ENCODE measurements at regions of chr1 and their contacts with region 1.

Region 1: DNA sequence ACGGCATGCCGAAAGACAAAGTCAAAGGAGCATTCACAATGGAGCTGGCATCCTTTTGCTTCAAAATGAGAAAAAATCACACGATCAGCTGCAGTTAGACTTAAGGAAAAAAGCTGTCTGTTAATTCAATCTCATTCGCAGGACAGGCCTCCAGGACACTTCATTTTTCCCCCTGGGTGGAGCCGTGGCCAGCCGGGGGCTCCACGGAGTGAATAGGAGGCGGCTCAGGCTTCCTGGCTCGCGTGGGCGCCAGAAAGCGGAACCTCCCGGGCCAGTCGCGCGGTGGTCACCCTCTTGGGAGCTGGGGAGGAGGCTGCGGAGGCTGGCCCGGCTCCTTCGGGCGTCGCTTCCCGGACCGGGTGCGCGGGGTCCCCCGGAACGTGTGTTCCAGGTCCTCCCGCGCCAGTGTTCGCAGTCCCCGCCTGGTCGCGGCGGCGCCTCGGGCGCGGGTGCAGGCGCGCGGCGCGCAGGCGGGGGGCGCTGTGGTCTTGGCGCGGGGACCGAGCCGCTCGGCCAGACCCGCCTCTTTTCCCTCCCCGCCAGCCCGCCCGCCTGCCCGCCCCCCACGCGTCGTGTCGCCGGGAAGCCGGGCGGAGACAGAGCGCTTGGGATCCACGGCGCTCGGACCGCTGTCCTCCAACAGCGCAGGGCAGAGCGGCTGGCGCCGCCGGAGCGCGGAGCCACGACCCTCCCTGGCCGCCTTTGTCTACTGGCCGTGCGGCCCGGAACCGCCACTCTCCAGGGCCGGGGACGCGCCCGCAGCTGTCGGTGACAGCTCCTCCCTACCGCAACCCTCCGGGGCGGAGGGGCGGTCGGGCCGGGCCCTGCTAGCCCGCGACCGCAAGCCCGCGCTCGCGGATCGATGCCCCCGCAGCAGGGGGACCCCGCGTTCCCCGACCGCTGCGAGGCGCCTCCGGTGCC is at the start of gene RHOU:
- DNase-seq: peak; percentile 79 to 91 (median 81)
- ATAC-seq: peak; percentile 84 to 95 (median 90)
- H3K4me3 ChIP-seq: peak within 1 kb of the TSS; percentile 62 to 94 (median 81)
- H3K27ac ChIP-seq: peak within 1 kb of the TSS; percentile 68 to 96 (median 86)
- H3K4me1 ChIP-seq: peaks cover 0 to 47% (median 9%) of the 10 kb centered on the region in 12 donors
- H3K27me3 ChIP-seq: peaks cover 0 to 7% (median 0%) of the 10 kb centered on the region in 9 donors
- CTCF ChIP-seq: peak; percentile 21 to 96 (median 90)
- POLR2A ChIP-seq: peak in 1 of 2 donors; percentile 53
- total RNA-seq, gene RHOU: 2.1 to 20.5 (median 2.9) TPM

Region 2: GRCh38 chr1:228332797-228333738 is 402.1 kb before region 1 on chr1:
- intact Hi-C with region 1: no loop called
- DNase-seq: peak in 3 of 5 donors; percentile 5 to 18 (median 15)
- ATAC-seq: no peak
- H3K4me3 ChIP-seq: no peak overlapping the region
- H3K27ac ChIP-seq: no peak overlapping the region
- H3K4me1 ChIP-seq: peaks cover 0 to 20% (median 0%) of the 10 kb centered on the region in 12 donors
- H3K27me3 ChIP-seq: no peaks in the 10 kb centered on the region
- CTCF ChIP-seq: no peak
- POLR2A ChIP-seq: no peak

Region 3: DNA sequence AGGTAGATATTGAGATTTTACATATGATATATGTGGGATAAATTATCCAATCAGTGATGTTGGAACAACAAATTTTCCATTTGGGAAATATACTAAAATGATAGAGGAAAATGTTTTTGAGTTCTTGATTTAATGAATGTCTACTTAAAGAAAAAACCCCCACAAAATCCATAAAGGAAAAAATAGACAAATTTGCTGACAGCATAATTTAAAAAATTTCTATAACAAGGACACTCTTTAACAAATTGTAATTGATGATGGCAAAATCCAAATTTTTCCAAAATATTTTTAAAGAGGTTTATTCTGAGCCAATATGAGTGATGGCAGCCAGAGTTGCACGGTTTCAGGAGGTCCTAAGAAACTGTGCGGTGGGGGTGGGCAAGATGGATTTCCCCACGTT is 51.7 kb before region 1 on chr1:
- intact Hi-C with region 1: no loop called
- DNase-seq: no peak
- ATAC-seq: no peak
- H3K4me3 ChIP-seq: no peak overlapping the region
- H3K27ac ChIP-seq: no peak overlapping the region
- H3K4me1 ChIP-seq: peaks cover 0 to 22% (median 5%) of the 10 kb centered on the region in 12 donors
- H3K27me3 ChIP-seq: peaks cover 0 to 3% (median 0%) of the 10 kb centered on the region in 9 donors
- CTCF ChIP-seq: no peak
- POLR2A ChIP-seq: no peak

Region 4: GRCh38 chr1:228825840-228826484 is 90.8 kb after region 1 on chr1:
- intact Hi-C with region 1: loop called in 2 of 10 experiments (anchors 10 kb)
- DNase-seq: no peak
- ATAC-seq: no peak
- H3K4me3 ChIP-seq: no peak overlapping the region
- H3K27ac ChIP-seq: peak overlapping the region in 1 of 12 donors; percentile 74
- H3K4me1 ChIP-seq: peaks cover 0 to 34% (median 0%) of the 10 kb centered on the region in 12 donors
- H3K27me3 ChIP-seq: peaks cover 0 to 18% (median 0%) of the 10 kb centered on the region in 9 donors
- CTCF ChIP-seq: no peak
- POLR2A ChIP-seq: no peak

Region 5: DNA sequence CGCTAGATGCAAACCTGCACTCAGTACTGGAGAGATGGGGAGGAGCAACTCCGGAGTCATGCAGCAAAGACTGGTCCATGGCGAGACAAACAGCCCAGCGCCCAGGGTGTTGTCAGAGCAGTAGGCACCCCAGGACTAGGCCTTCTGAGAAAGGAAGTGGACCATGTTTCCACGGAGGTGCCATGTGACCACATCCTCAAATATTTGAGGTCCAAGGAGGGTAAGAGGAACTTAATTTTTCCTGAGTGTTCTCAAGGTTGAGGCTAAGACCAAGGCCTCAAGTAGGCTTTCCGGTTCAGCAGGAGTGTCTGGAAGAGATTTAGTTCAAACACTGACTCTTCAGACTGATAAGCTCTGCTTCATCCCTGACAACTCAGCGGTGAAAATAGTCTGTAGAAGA is 186.3 kb after region 1 on chr1:
- intact Hi-C with region 1: no loop called
- DNase-seq: no peak
- ATAC-seq: peak in 3 of 4 donors; percentile 37 to 51 (median 46)
- H3K4me3 ChIP-seq: no peak overlapping the region
- H3K27ac ChIP-seq: peak overlapping the region in 1 of 12 donors; percentile 47
- H3K4me1 ChIP-seq: peaks cover 0 to 24% (median 0%) of the 10 kb centered on the region in 12 donors
- H3K27me3 ChIP-seq: no peaks in the 10 kb centered on the region
- CTCF ChIP-seq: no peak
- POLR2A ChIP-seq: no peak

Region 6: GRCh38 chr1:228938537-228938901 is 203.4 kb after region 1 on chr1:
- intact Hi-C with region 1: loop called in 1 of 10 experiments (anchors 5 kb)
- DNase-seq: peak in 4 of 5 donors; percentile 39 to 57 (median 48)
- ATAC-seq: peak; percentile 80 to 93 (median 88)
- H3K4me3 ChIP-seq: peak overlapping the region in 2 of 12 donors; percentile 19 to 30
- H3K27ac ChIP-seq: peak overlapping the region; percentile 39 to 89 (median 69)
- H3K4me1 ChIP-seq: peaks cover 0 to 68% (median 17%) of the 10 kb centered on the region in 12 donors
- H3K27me3 ChIP-seq: peaks cover 0 to under 1% (median 0%) of the 10 kb centered on the region in 9 donors
- CTCF ChIP-seq: no peak
- POLR2A ChIP-seq: peak in 1 of 2 donors; percentile 37

Region 7: GRCh38 chr1:228982616-228983015 is 247.5 kb after region 1 on chr1:
- intact Hi-C with region 1: no loop called
- DNase-seq: no peak
- ATAC-seq: peak in 1 of 4 donors; percentile 13
- H3K4me3 ChIP-seq: no peak overlapping the region
- H3K27ac ChIP-seq: no peak overlapping the region
- H3K4me1 ChIP-seq: peaks cover 0 to 24% (median 11%) of the 10 kb centered on the region in 12 donors
- H3K27me3 ChIP-seq: no peaks in the 10 kb centered on the region
- CTCF ChIP-seq: no peak
- POLR2A ChIP-seq: no peak

Region 8: DNA sequence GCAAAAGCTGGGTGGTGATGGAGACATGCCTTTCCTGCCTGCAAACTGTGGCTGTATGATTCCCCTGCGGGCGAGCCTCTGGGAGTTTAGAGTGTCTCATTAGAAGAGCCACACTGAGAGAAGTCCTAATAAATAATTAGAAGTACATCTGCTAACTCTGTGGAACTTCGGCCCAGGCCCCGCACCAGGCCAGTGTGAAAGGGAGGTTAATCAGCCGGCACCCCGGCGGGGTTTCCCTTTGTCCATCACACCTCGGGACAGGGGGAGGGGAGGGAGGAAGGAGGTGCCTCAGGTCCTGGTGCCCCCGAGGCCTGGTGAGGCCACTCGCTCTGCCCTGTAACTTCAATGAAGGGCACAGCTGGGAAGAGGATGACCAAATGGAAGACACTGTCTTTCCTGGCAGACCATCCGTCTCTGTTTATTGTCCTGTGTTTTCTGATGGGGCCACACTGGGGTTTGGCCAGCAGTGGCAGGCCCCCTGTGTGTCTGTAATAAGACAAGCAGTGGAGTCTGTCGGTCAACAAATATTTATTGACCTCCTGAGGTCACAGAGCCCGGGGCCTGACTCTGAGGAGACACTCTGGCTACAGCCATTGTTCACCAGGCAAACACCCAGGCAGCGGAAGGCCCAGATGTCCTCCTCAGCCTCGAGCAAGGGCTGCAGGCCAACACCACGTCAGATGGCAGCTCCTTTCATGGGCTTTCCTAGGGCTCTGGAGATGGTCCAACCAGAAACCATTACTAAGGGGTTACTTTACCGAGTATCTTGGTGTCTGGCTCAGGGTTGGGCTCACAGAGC is 268.3 kb after region 1 on chr1:
- intact Hi-C with region 1: loop called in 2 of 10 experiments (anchors 10 kb)
- DNase-seq: no peak
- ATAC-seq: peak in 1 of 4 donors; percentile 7
- H3K4me3 ChIP-seq: no peak overlapping the region
- H3K27ac ChIP-seq: peak overlapping the region in 1 of 12 donors; percentile 55
- H3K4me1 ChIP-seq: peaks cover 0 to 7% (median 0%) of the 10 kb centered on the region in 12 donors
- H3K27me3 ChIP-seq: peaks cover 0 to 8% (median 0%) of the 10 kb centered on the region in 9 donors
- CTCF ChIP-seq: no peak
- POLR2A ChIP-seq: no peak

Region 9: DNA sequence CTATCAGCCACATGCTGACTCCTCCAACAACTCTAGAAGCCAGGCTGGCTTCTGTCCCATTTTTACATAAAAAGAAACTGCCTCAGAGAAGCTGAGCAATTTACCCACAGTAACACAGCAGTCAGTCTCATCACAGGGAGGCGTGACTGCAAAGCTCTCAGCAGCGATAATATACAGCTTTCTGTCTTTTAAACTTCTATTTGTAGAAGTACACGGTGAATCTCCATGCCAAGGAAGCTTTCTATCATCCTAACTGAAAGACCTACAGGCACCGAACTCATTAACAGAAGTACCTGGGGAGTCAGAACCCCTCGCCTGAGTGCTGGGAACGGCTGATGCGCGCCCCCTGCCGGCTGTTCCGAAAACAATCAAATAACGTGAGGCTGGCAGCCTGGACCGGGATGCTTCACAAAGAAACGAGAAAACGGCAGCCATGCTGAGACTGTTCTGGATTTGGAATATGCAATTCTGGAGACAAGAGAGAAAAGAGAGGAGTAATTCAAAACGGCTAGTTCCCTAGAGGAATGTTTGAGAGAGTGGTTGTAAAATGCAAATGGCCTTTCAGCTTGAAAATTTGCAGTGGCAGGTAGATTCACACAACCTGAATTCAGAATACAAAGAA is 492.3 kb after region 1 on chr1:
- intact Hi-C with region 1: loop called (anchors 1 to 5 kb)
- DNase-seq: peak; percentile 76 to 91 (median 81)
- ATAC-seq: peak; percentile 22 to 51 (median 30)
- H3K4me3 ChIP-seq: no peak overlapping the region
- H3K27ac ChIP-seq: no peak overlapping the region
- H3K4me1 ChIP-seq: peaks cover 0 to 39% (median 21%) of the 10 kb centered on the region in 12 donors
- H3K27me3 ChIP-seq: peaks cover 0 to 7% (median 0%) of the 10 kb centered on the region in 9 donors
- CTCF ChIP-seq: peak; percentile 78 to 93 (median 88)
- POLR2A ChIP-seq: no peak